Activated naive CD4-positive, alpha-beta T cell treated with anti-CD3 and anti-CD28 coated beads for 36 hours (primary cell): ENCODE measurements at regions of chr2 and their contacts with region 1.

Region 1: GRCh38 chr2:207746131-207746530 is 23.6 kb downstream of the FZD5 start:
- DNase-seq: peak; percentile 62
- H3K4me3 Mint-ChIP-seq: no peak overlapping the region
- H3K27ac Mint-ChIP-seq: no peak overlapping the region
- H3K4me1 Mint-ChIP-seq: no peaks in the 10 kb centered on the region
- H3K27me3 Mint-ChIP-seq: no peaks in the 10 kb centered on the region

Region 2: GRCh38 chr2:207974216-207974605 is 228.1 kb after region 1 on chr2:
- CTCF ChIA-PET with region 1: interaction called, 25 read pairs
- intact Hi-C with region 1: loop called (anchors 1 kb)
- DNase-seq: no peak
- H3K4me3 Mint-ChIP-seq: no peak overlapping the region
- H3K27ac Mint-ChIP-seq: no peak overlapping the region
- H3K4me1 Mint-ChIP-seq: peaks cover 17% of the 10 kb centered on the region
- H3K27me3 Mint-ChIP-seq: no peaks in the 10 kb centered on the region

Region 3: DNA sequence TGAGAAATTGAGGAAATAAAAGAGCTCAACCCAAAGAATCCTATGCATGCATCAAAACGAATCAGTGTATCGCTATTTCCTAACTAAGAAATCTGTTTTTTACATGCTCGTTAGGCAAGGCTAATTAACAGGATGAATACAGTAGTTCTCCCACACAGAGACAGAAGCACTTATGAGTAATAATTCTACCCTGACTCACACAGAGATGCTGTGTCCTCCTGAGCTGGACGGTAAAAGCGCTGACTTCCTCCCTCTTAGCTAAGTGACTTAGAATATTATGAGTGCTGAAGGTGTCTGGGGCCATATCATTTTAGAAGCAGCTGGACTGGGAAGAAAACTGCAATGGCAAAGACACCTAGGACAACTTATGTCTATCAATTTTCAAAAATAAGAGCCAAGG is 260.7 kb after region 1 on chr2:
- CTCF ChIA-PET with region 1: no interaction called
- intact Hi-C with region 1: no loop called
- DNase-seq: no peak
- H3K4me3 Mint-ChIP-seq: no peak overlapping the region
- H3K27ac Mint-ChIP-seq: no peak overlapping the region
- H3K4me1 Mint-ChIP-seq: peaks cover 5% of the 10 kb centered on the region
- H3K27me3 Mint-ChIP-seq: no peaks in the 10 kb centered on the region

Region 4: GRCh38 chr2:208033758-208034502 is 287.8 kb after region 1 on chr2:
- CTCF ChIA-PET with region 1: interaction called, 54 read pairs
- intact Hi-C with region 1: loop called (anchors 1 kb)
- DNase-seq: peak; percentile 59
- H3K4me3 Mint-ChIP-seq: no peak overlapping the region
- H3K27ac Mint-ChIP-seq: no peak overlapping the region
- H3K4me1 Mint-ChIP-seq: no peaks in the 10 kb centered on the region
- H3K27me3 Mint-ChIP-seq: no peaks in the 10 kb centered on the region

Region 5: DNA sequence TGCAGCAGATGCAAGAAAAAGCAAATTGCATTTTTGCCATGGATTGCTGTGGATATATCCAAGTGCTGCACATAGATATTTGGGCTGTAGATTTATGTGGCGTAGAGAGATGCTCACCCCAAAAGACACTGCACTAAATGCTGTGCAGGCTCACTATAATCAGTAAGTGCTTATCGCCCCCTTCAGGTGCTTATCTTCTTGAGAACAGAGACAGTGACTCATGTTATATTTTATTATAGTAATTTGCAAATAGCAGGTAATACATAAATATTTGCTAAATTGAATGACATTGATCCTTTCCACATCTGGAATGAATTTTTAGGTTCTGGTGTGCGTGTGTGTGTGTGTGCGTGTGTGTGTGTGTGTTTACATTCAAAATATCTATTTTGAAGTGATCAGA is 316.0 kb after region 1 on chr2:
- CTCF ChIA-PET with region 1: interaction called, 3 read pairs
- intact Hi-C with region 1: loop called (anchors 1 kb)
- DNase-seq: peak; percentile 26
- H3K4me3 Mint-ChIP-seq: no peak overlapping the region
- H3K27ac Mint-ChIP-seq: no peak overlapping the region
- H3K4me1 Mint-ChIP-seq: no peaks in the 10 kb centered on the region
- H3K27me3 Mint-ChIP-seq: peaks cover 3% of the 10 kb centered on the region

Region 6: GRCh38 chr2:208072250-208072892 is 326.2 kb after region 1 on chr2:
- CTCF ChIA-PET with region 1: interaction called, 12 read pairs
- intact Hi-C with region 1: loop called (anchors 1 kb)
- DNase-seq: peak; percentile 76
- H3K4me3 Mint-ChIP-seq: no peak overlapping the region
- H3K27ac Mint-ChIP-seq: no peak overlapping the region
- H3K4me1 Mint-ChIP-seq: no peaks in the 10 kb centered on the region
- H3K27me3 Mint-ChIP-seq: peaks cover under 1% of the 10 kb centered on the region